HCT116 (cell line): ENCODE measurements at regions of chr19 and their contacts with region 1.

Region 1: DNA sequence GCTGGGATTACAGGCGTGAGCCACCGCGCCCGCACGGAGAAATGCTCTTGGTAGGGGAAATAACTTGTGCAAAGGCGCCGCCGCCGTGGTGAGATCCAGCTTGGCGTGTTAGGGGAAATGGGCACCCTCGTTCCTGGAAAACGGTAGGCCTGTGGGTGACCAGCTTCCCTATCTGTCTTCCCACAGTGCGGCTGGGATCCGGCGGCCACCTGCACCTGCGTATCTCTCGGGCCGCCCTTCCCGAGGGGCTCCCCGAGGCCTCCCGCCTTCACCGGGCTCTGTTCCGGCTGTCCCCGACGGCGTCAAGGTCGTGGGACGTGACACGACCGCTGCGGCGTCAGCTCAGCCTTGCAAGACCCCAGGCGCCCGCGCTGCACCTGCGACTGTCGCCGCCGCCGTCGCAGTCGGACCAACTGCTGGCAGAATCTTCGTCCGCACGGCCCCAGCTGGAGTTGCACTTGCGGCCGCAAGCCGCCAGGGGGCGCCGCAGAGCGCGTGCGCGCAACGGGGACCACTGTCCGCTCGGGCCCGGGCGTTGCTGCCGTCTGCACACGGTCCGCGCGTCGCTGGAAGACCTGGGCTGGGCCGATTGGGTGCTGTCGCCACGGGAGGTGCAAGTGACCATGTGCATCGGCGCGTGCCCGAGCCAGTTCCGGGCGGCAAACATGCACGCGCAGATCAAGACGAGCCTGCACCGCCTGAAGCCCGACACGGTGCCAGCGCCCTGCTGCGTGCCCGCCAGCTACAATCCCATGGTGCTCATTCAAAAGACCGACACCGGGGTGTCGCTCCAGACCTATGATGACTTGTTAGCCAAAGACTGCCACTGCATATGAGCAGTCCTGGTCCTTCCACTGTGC is 2.4 kb downstream of the GDF15 start:
- DNase-seq: no peak
- ATAC-seq: peak; percentile 73
- H3K4me3 ChIP-seq: peak overlapping the region; percentile 71 to 91
- H3K27ac ChIP-seq: peak overlapping the region; percentile 82
- H3K4me1 ChIP-seq: peaks cover 40 to 79% of the 10 kb centered on the region in 2 experiments
- H3K27me3 ChIP-seq: no peaks in the 10 kb centered on the region
- CTCF ChIP-seq: peak; percentile 53 to 98 (median 88); a peak in 5 of 6 replicates
- POLR2A ChIP-seq: no peak
- RAD21 ChIP-seq: peak; percentile 55

Region 2: DNA sequence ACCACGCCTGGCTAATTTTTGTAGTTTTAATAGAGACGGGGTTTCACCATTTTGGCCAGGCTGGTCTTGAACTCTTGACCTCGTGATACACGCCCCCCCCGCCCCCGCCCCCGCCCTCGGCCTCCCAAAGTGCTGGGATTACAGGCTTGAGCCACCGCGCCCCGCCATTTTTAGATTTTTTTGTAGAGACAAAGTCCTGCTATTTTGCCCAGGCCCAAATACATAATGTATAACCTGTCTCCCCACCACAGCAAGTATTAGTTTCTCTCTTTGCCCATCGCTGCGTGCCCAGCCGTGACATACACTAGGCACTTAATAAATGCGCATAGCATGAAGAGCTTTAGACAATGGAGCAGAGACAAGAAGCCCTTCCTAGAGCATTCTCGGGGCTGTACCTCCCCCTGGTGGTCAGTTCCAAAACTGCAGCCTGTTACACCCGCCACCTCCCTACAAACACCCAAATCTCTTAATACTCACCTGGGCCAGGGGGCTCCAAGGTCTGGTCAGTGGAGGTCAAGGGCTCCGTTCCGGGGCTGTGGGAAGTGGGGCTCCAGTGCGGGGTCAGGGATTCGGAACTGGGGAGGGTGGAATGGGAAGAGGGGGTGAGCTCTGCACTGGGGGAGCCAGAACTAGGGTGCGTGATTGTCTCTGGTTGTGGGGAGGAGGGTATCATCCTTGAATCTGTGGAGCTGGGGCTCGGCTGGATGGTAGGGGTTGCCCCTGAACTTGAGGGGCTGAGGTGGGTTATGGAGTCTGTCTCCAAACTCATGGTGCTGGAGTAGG is 136.6 kb before region 1 on chr19:
- CTCF ChIA-PET with region 1: no interaction called
- POLR2A ChIA-PET with region 1: no interaction called
- RAD21 ChIA-PET with region 1: no interaction called
- intact Hi-C with region 1: no loop called
- DNase-seq: peak; percentile 74
- ATAC-seq: peak; percentile 84
- H3K4me3 ChIP-seq: no peak overlapping the region
- H3K27ac ChIP-seq: no peak overlapping the region
- H3K4me1 ChIP-seq: peaks cover 0 to 28% of the 10 kb centered on the region in 2 experiments; a peak in 2 of 4 replicates
- H3K27me3 ChIP-seq: no peaks in the 10 kb centered on the region
- CTCF ChIP-seq: peak; percentile 91 to 99 (median 92)
- POLR2A ChIP-seq: no peak
- RAD21 ChIP-seq: peak; percentile 99

Region 3: DNA sequence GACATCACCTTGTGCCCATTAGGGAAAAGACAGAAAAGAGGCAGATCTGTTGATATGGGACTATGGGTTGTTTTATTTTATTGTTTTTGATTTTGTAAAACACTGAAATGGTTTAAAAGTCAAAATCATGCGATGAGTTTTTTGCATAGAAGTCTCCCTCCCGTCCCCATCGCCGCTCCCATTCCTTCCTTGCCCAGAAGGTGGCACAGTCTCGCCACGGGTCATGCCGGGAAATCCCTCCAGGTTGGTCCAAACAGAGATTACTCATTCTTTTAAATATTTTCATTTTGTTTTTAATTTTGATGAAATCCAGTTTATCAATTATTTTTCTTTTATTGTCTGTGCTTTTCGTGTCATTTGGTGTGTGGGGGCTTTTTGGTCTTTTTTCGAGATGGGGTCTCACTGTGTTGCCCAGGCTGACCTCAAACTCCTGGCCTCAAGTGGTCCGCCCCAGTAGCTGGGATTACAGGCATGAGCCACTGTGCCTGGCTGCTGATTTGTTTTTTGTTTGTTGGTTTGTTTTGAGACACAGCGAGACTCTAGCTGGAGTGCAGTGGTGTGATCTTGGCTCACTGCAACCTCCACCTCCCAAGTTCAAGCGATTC is 38.7 kb before region 1 on chr19:
- CTCF ChIA-PET with region 1: interaction called, 4 read pairs
- POLR2A ChIA-PET with region 1: interaction called, 13 read pairs
- RAD21 ChIA-PET with region 1: no interaction called
- intact Hi-C with region 1: loop called (anchors 2 kb)
- DNase-seq: no peak
- ATAC-seq: peak; percentile 83
- H3K4me3 ChIP-seq: no peak overlapping the region
- H3K27ac ChIP-seq: no peak overlapping the region
- H3K4me1 ChIP-seq: peaks cover 28 to 37% of the 10 kb centered on the region in 2 experiments
- H3K27me3 ChIP-seq: no peaks in the 10 kb centered on the region
- CTCF ChIP-seq: peak; percentile 86 to 93 (median 89); a peak in 5 of 6 replicates
- POLR2A ChIP-seq: no peak
- RAD21 ChIP-seq: peak; percentile 95

Region 4: DNA sequence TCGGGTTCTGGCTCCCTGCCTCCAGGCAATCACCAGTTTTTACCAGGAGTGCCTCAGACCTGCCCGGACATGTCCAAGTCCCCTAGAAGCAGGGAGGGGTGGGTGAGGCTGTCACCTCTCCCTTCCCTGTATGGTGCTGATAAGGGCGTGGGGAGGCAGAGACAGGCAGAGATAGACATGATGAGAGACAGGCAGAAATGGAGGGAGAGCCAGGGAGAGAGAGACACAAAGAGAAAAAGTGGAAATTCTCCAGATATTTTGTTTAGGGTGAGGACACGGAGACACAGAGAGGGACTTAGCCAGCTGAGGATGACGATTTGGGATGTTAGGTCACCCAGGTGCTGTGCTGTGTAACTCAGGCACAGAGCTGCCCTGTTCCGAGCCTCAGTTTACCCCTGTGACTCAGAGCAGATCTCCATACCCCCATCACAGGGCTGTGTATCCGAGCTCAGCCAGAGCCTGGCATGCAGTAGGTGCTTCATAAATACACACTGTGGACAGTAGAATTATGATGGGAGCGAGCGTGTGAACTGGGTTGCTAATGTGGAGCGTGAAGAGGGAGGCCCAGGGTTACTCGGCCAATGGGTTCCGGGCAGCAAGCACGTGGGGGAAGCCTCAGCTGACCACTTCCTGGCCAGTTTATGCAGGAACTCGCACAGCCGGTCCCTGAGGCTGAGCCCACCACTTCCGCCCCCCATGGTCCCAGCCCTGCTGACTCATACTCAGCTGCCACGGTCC is 14.3 kb before region 1 on chr19:
- CTCF ChIA-PET with region 1: interaction called, 4 read pairs
- POLR2A ChIA-PET with region 1: interaction called, 58 read pairs
- RAD21 ChIA-PET with region 1: no interaction called
- intact Hi-C with region 1: no loop called
- DNase-seq: peak; percentile 94
- ATAC-seq: peak; percentile 88
- H3K4me3 ChIP-seq: peak overlapping the region in 1 of 2 experiments; percentile 23; a peak in 3 of 4 replicates
- H3K27ac ChIP-seq: peak overlapping the region; percentile 92
- H3K4me1 ChIP-seq: peaks cover 61 to 64% of the 10 kb centered on the region in 2 experiments
- H3K27me3 ChIP-seq: no peaks in the 10 kb centered on the region
- CTCF ChIP-seq: no peak
- POLR2A ChIP-seq: no peak
- RAD21 ChIP-seq: no peak

Region 5: DNA sequence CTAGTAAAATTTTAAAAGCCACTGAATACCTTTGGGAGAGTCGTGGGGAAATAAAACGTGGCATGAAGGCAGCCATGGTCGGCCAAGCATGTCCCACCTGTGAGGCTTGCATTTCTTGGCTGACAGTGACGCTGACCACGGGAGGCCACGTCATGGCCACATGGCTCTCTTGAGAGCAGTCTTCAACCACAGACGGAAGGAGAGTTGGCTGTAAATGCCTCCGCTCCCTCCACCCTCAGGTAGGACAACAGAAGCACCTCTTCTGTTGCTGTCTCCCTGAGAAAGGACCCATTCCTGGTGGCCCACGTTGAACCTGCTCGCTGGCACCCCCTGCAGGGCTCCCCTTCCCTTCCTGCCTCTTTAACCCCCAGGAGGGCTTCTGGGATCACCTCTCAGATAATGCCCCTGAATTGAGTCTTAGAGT is 19.7 kb after region 1 on chr19:
- CTCF ChIA-PET with region 1: interaction called, 4 read pairs
- POLR2A ChIA-PET with region 1: interaction called, 40 read pairs
- RAD21 ChIA-PET with region 1: interaction called in 1 of 2 experiments, 4 read pairs
- intact Hi-C with region 1: no loop called
- DNase-seq: no peak
- ATAC-seq: peak; percentile 51
- H3K4me3 ChIP-seq: no peak overlapping the region
- H3K27ac ChIP-seq: peak overlapping the region; percentile 4; the same call in 1 of the 2 replicates
- H3K4me1 ChIP-seq: peaks cover 9 to 30% of the 10 kb centered on the region in 2 experiments; a peak in 3 of 4 replicates
- H3K27me3 ChIP-seq: no peaks in the 10 kb centered on the region
- CTCF ChIP-seq: peak; percentile 69 to 84 (median 73)
- POLR2A ChIP-seq: no peak
- RAD21 ChIP-seq: peak; percentile 75

Region 6: DNA sequence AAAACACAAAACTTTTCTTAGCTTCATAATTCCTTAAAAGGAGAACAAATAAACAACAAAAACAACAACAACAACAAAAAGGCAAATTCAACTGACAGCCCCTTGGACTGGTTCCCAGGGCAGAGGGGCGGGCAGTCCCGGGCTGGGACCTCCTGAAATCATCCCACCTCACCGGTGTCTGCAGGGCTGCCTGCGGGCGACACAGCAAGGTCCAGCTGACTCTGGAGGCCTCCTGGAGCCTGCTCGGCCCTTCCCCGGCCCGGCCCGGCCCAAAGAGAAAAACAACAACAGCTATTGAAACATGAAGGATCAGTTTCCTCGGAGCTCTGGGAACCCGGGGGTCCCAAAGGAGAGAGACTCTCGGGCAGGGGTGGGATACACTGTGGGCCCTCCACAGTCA is 54.6 kb after region 1 on chr19:
- CTCF ChIA-PET with region 1: no interaction called
- POLR2A ChIA-PET with region 1: no interaction called
- RAD21 ChIA-PET with region 1: no interaction called
- intact Hi-C with region 1: no loop called
- DNase-seq: no peak
- ATAC-seq: no peak
- H3K4me3 ChIP-seq: no peak overlapping the region
- H3K27ac ChIP-seq: no peak overlapping the region
- H3K4me1 ChIP-seq: peaks cover 27 to 34% of the 10 kb centered on the region in 2 experiments
- H3K27me3 ChIP-seq: no peaks in the 10 kb centered on the region
- CTCF ChIP-seq: no peak
- POLR2A ChIP-seq: no peak
- RAD21 ChIP-seq: no peak